Naive thymus-derived CD4-positive, alpha-beta T cell (primary cell): ENCODE measurements at regions of chr1 and their contacts with region 1.

Region 1: DNA sequence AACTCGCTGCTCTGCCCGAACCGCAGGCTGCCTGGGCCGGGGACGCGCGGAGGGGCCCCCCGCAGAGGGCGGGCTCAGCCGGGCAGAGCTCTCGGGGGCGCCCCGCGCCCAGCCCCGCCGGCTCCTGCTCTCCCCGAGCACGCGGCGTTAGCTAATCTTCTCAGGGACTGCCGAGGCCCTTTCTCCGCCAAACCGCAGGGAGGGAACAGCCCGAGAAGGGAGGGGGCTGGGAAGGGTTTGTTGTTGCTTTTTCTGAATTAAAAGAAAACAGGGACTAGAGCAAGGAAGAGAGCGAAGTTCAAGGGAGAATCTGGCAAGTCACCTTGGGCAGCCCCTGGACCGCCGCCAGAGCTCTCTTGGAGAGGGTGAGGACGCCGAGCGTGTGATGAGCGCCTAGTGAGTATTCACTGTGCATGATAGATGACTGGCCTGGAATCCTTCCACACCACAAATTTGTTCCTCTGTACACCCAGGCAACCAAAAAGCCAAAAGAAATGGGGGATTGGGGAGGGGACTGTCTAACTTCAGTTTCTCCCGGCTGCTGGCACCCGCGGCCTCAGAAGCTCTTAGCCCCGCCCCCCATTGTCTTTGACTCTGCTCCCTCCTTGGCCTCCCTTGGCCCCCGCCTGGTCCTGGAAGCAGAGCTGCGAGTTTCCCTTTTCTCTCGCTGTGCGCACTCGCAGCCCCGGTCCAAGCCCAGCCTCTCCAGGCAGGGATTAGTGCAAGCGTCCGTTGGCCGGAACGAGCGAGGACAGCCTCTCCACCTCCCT is 19.7 kb upstream of the LMX1A start:
- DNase-seq: peak in 6 of 9 donors; percentile 13 to 22 (median 16)
- ATAC-seq: peak; percentile 71
- H3K4me3 ChIP-seq: peak overlapping the region; percentile 35
- H3K4me3 Mint-ChIP-seq: peak overlapping the region; percentile 41 to 81 (median 74)
- H3K27ac ChIP-seq: no peak overlapping the region
- H3K27ac Mint-ChIP-seq: peak overlapping the region in 1 of 9 donors; percentile 43
- H3K4me1 ChIP-seq: peaks cover 2 to 13% of the 10 kb centered on the region in 2 donors
- H3K4me1 Mint-ChIP-seq: peaks cover 12 to 22% (median 20%) of the 10 kb centered on the region in 7 donors
- H3K27me3 ChIP-seq: peaks cover 3 to 18% of the 10 kb centered on the region in 2 donors
- H3K27me3 Mint-ChIP-seq: peaks cover 54 to 86% (median 69%) of the 10 kb centered on the region in 5 donors

Region 2: GRCh38 chr1:165191087-165191486 is 185.1 kb before region 1 on chr1:
- CTCF ChIA-PET with region 1: no interaction called
- POLR2A ChIA-PET with region 1: no interaction called
- intact Hi-C with region 1: no loop called
- DNase-seq: no peak
- ATAC-seq: no peak
- H3K4me3 ChIP-seq: no peak overlapping the region
- H3K4me3 Mint-ChIP-seq: no peak overlapping the region
- H3K27ac ChIP-seq: no peak overlapping the region
- H3K27ac Mint-ChIP-seq: no peak overlapping the region
- H3K4me1 ChIP-seq: no peaks in the 10 kb centered on the region
- H3K4me1 Mint-ChIP-seq: no peaks in the 10 kb centered on the region
- H3K27me3 ChIP-seq: no peaks in the 10 kb centered on the region
- H3K27me3 Mint-ChIP-seq: peaks cover 0 to 12% (median 6%) of the 10 kb centered on the region in 5 donors

Region 3: GRCh38 chr1:165317612-165318011 is 58.6 kb before region 1 on chr1:
- CTCF ChIA-PET with region 1: no interaction called
- POLR2A ChIA-PET with region 1: no interaction called
- intact Hi-C with region 1: loop called in 1 of 2 experiments (anchors 10 kb)
- DNase-seq: no peak
- ATAC-seq: no peak
- H3K4me3 ChIP-seq: no peak overlapping the region
- H3K4me3 Mint-ChIP-seq: no peak overlapping the region
- H3K27ac ChIP-seq: no peak overlapping the region
- H3K27ac Mint-ChIP-seq: no peak overlapping the region
- H3K4me1 ChIP-seq: no peaks in the 10 kb centered on the region
- H3K4me1 Mint-ChIP-seq: peaks cover 0 to 1% (median 0%) of the 10 kb centered on the region in 7 donors
- H3K27me3 ChIP-seq: no peaks in the 10 kb centered on the region
- H3K27me3 Mint-ChIP-seq: peaks cover 10 to 77% (median 54%) of the 10 kb centered on the region in 5 donors